Transverse colon (tissue), 4 donors: ENCODE measurements at regions of chr6 and their contacts with region 1.

Region 1: GRCh38 chr6:31068669-31069340 is 43.6 kb downstream of the C6orf15 start:
- DNase-seq: peak; percentile 77
- H3K4me3 ChIP-seq: no peak overlapping the region
- H3K27ac ChIP-seq: no peak overlapping the region
- H3K4me1 ChIP-seq: peaks cover 0 to 15% (median 3%) of the 10 kb centered on the region in 4 donors
- H3K27me3 ChIP-seq: peaks cover 10% of the 10 kb centered on the region
- CTCF ChIP-seq: peak; percentile 81 to 95 (median 86)
- EP300 ChIP-seq: no peak
- POLR2A ChIP-seq: no peak

Region 2: GRCh38 chr6:30453508-30454116 is 615.2 kb before region 1 on chr6:
- in situ Hi-C with region 1: loop called in 1 of 4 experiments (anchors 25 kb)
- intact Hi-C with region 1: no loop called
- DNase-seq: peak; percentile 86
- H3K4me3 ChIP-seq: no peak overlapping the region
- H3K27ac ChIP-seq: no peak overlapping the region
- H3K4me1 ChIP-seq: peaks cover 2 to 19% (median 6%) of the 10 kb centered on the region in 4 donors
- H3K27me3 ChIP-seq: peaks cover 94% of the 10 kb centered on the region
- CTCF ChIP-seq: peak; percentile 68 to 82 (median 76)
- EP300 ChIP-seq: no peak
- POLR2A ChIP-seq: no peak

Region 3: GRCh38 chr6:30914076-30914853 is 154.5 kb before region 1 on chr6 and contains the start of gene VARS2:
- in situ Hi-C with region 1: loop called in 1 of 4 experiments (anchors 10 kb)
- intact Hi-C with region 1: loop called (anchors 5 kb)
- DNase-seq: peak; percentile 95
- H3K4me3 ChIP-seq: peak within 1 kb of the TSS; percentile 44 to 74 (median 57)
- H3K27ac ChIP-seq: peak within 1 kb of the TSS; percentile 92 to 94 (median 94)
- H3K4me1 ChIP-seq: peaks cover 9 to 26% (median 18%) of the 10 kb centered on the region in 4 donors
- H3K27me3 ChIP-seq: no peaks in the 10 kb centered on the region
- CTCF ChIP-seq: peak; percentile 14 to 53 (median 30)
- EP300 ChIP-seq: no peak
- POLR2A ChIP-seq: peak; percentile 89
- total RNA-seq, gene VARS2: 13.1 to 64.7 (median 25.8) TPM

Region 4: DNA sequence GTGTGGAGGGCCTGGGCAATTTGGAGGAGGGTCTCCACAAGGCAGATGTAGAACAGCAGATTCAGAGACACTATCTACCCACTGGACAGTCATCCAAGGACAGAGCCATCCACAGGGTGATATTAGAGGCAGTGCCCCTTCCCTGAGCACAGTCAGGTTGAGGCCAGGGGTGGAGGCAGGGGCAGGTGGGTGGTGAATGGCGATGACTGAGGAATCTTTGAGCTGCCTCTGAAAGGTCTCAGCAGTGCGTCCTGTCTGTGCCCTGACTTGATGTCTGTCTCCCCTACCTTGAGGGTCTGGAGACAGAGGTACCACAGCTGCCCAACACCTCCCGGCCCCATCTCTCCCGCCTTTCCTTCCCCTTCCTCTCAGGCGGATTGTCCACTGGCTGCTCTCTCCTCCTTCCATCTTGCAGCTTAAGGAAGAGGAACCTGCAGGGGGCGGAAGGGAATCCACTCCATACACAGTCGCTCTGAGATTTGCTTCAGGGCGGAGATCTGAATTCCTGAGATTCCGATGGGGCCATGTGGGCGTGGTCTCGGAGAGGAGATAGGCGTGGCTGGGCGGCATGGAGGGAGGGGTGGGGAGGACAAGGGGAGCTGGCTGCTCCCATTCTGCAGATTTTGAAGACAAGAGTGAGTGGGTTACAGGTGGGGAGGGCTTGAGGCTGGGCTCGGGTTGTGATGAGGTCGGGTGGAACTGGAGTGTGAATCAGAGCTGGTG is 126.3 kb before region 1 on chr6:
- in situ Hi-C with region 1: loop called in 1 of 4 experiments (anchors 25 kb)
- intact Hi-C with region 1: no loop called
- DNase-seq: peak; percentile 76
- H3K4me3 ChIP-seq: no peak overlapping the region
- H3K27ac ChIP-seq: no peak overlapping the region
- H3K4me1 ChIP-seq: no peaks in the 10 kb centered on the region
- H3K27me3 ChIP-seq: peaks cover 41% of the 10 kb centered on the region
- CTCF ChIP-seq: peak in 4 of 5 experiments; percentile 22 to 50 (median 28)
- EP300 ChIP-seq: no peak
- POLR2A ChIP-seq: no peak